Left cardiac atrium (tissue), 4 donors: ENCODE measurements at regions of chr11 and their contacts with region 1.

Region 1: GRCh38 chr11:75248690-75249268 is 8.2 kb downstream of the TPBGL start:
- DNase-seq: peak; percentile 90
- ATAC-seq: peak; percentile 92 to 94

Region 2: GRCh38 chr11:75142714-75143419 is 105.9 kb before region 1 on chr11:
- intact Hi-C with region 1: loop called (anchors 2 to 5 kb)
- DNase-seq: peak; percentile 88
- ATAC-seq: peak; percentile 81 to 90